Activated B cell treated with CpG ODN at 0.5 μM for 24 hours (primary cell): ENCODE measurements at regions of chr5 and their contacts with region 1.

Region 1: GRCh38 chr5:442335-443238 is at the start of gene EXOC3:
- DNase-seq: peak; percentile 81
- ATAC-seq: peak; percentile 91
- H3K4me3 Mint-ChIP-seq: peak within 1 kb of the TSS; percentile 94
- H3K27ac Mint-ChIP-seq: peak within 1 kb of the TSS; percentile 90
- H3K4me1 Mint-ChIP-seq: peaks cover 36% of the 10 kb centered on the region
- H3K27me3 Mint-ChIP-seq: no peaks in the 10 kb centered on the region
- CTCF ChIP-seq: no peak
- total RNA-seq, gene EXOC3: 75.9 and 79.6 TPM in 2 replicates

Region 2: GRCh38 chr5:53281-54174 is 389.1 kb before region 1 on chr5:
- CTCF ChIA-PET with region 1: no interaction called
- POLR2A ChIA-PET with region 1: no interaction called
- intact Hi-C with region 1: no loop called
- DNase-seq: no peak
- ATAC-seq: peak; percentile 25
- H3K4me3 Mint-ChIP-seq: no peak overlapping the region
- H3K27ac Mint-ChIP-seq: no peak overlapping the region
- H3K4me1 Mint-ChIP-seq: peaks cover 1% of the 10 kb centered on the region
- H3K27me3 Mint-ChIP-seq: peaks cover 40% of the 10 kb centered on the region
- CTCF ChIP-seq: no peak

Region 3: GRCh38 chr5:270340-270739 is 172.2 kb before region 1 on chr5:
- CTCF ChIA-PET with region 1: no interaction called
- POLR2A ChIA-PET with region 1: interaction called, 4 read pairs
- intact Hi-C with region 1: loop called (anchors 1 kb)
- DNase-seq: no peak
- ATAC-seq: no peak
- H3K4me3 Mint-ChIP-seq: peak overlapping the region; percentile 92
- H3K27ac Mint-ChIP-seq: peak overlapping the region; percentile 12
- H3K4me1 Mint-ChIP-seq: peaks cover 20% of the 10 kb centered on the region
- H3K27me3 Mint-ChIP-seq: no peaks in the 10 kb centered on the region
- CTCF ChIP-seq: no peak

Region 4: DNA sequence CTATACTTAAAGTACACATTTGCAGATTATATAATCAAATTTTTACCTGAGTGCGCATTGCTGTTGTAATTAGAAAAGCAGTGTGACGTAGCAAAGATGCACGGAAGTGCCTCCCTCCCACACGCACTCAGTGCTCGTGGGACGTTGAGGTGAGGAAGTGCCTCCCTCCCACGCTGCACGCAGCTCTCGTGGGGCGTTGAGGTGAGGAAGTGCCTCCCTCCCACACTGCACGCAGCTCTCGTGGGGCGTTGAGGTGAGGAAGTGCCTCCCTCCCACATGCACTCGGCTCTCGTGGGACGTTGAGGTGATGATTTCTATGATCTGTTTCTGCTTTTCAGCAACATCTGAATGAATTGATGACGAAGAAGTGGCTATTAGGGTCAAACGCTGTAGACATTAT is 21.4 kb after region 1 on chr5:
- CTCF ChIA-PET with region 1: no interaction called
- POLR2A ChIA-PET with region 1: interaction called, 5 read pairs
- intact Hi-C with region 1: loop called (anchors 2 kb)
- DNase-seq: peak; percentile 61
- ATAC-seq: peak; percentile 95
- H3K4me3 Mint-ChIP-seq: no peak overlapping the region
- H3K27ac Mint-ChIP-seq: peak overlapping the region; percentile 13
- H3K4me1 Mint-ChIP-seq: peaks cover 37% of the 10 kb centered on the region
- H3K27me3 Mint-ChIP-seq: no peaks in the 10 kb centered on the region
- CTCF ChIP-seq: no peak

Region 5: GRCh38 chr5:611721-612486 is 169.3 kb after region 1 on chr5 and contains the start of gene CEP72:
- CTCF ChIA-PET with region 1: no interaction called
- POLR2A ChIA-PET with region 1: interaction called, 3 read pairs
- intact Hi-C with region 1: loop called (anchors 2 kb)
- DNase-seq: peak; percentile 90
- ATAC-seq: peak; percentile 97
- H3K4me3 Mint-ChIP-seq: peak within 1 kb of the TSS; percentile 93
- H3K27ac Mint-ChIP-seq: peak within 1 kb of the TSS; percentile 81
- H3K4me1 Mint-ChIP-seq: peaks cover 48% of the 10 kb centered on the region
- H3K27me3 Mint-ChIP-seq: peaks cover 6% of the 10 kb centered on the region
- CTCF ChIP-seq: no peak
- total RNA-seq, gene CEP72: 15.1 and 17.4 TPM in 2 replicates

Region 6: GRCh38 chr5:902129-902916 is 459.7 kb after region 1 on chr5:
- CTCF ChIA-PET with region 1: interaction called, 12 read pairs
- POLR2A ChIA-PET with region 1: no interaction called
- intact Hi-C with region 1: loop called (anchors 2 kb)
- DNase-seq: no peak
- ATAC-seq: no peak
- H3K4me3 Mint-ChIP-seq: no peak overlapping the region
- H3K27ac Mint-ChIP-seq: no peak overlapping the region
- H3K4me1 Mint-ChIP-seq: no peaks in the 10 kb centered on the region
- H3K27me3 Mint-ChIP-seq: no peaks in the 10 kb centered on the region
- CTCF ChIP-seq: no peak